Left ventricle myocardium inferior (tissue), 1 donor: ENCODE measurements at regions of chr4 and their contacts with region 1.

Region 1: DNA sequence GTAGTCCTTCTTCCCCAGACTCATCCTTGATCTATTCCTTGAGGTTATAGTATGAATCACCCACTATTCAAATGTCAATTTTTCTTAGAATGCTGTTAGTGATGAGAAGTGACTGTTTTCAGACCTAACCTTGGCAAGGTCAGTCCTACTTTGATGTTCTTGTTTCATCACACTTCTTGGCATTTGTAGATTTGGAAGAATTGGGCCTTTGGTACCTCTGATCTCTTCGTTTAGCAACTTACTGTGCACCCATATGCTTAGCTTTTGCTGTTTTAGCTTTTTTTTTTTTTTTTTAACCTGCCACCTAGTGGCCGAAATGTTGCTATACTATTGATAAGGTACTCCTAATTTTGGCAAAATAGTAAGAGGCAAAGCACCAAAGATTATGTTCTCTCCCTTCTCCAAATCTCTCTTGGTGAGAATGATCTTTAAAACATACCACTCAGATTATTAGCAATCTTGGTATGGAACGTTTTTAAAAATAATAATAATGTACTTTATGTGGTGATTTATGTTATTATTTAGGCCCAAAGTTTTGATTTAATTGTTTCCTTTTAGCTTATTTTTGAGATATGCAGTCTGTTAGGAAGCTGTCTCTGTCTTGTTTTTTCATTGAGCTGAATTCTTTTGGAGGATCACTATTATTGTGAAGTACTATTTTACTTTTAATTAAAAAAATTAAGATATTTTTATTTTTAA is 16.6 kb downstream of the DCK start:
- DNase-seq: no peak
- H3K4me3 ChIP-seq: no peak overlapping the region
- H3K27ac ChIP-seq: no peak overlapping the region
- H3K4me1 ChIP-seq: peaks cover 12% of the 10 kb centered on the region
- H3K27me3 ChIP-seq: no peaks in the 10 kb centered on the region
- CTCF ChIP-seq: peak; percentile 72

Region 2: GRCh38 chr4:70651864-70652506 is 358.1 kb before region 1 on chr4:
- intact Hi-C with region 1: loop called (anchors 10 kb)
- DNase-seq: no peak
- H3K4me3 ChIP-seq: no peak overlapping the region
- H3K27ac ChIP-seq: no peak overlapping the region
- H3K4me1 ChIP-seq: no peaks in the 10 kb centered on the region
- H3K27me3 ChIP-seq: no peaks in the 10 kb centered on the region
- CTCF ChIP-seq: peak; percentile 65

Region 3: DNA sequence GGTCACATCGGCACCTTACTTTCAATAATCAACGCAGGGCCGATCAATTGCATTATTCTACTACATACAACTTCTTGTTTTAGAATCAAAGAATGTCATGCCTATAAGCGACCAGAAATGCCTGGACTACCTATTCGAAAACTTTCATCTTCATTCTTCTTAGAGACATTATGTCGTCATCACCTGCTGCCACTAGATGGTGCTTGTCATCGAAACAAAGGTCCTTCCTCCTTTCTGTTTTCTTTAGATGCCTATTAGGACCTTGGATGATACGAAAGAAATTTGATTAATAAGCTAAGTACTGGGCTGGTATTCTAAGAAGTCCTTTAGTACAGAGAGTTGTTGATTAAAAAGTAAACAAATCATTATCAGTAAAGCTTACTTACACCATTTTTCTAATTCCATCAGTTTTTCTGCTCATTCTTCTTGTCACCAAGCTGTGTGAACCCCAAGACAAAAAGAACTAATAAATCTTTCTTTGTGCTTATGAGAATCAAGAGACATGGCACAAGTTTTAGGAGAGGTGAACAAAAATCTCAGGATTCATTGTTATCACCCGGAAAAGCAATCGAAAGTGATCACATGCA is 174.2 kb after region 1 on chr4:
- intact Hi-C with region 1: no loop called
- DNase-seq: no peak
- H3K4me3 ChIP-seq: no peak overlapping the region
- H3K27ac ChIP-seq: no peak overlapping the region
- H3K4me1 ChIP-seq: peaks cover 31% of the 10 kb centered on the region
- H3K27me3 ChIP-seq: peaks cover 22% of the 10 kb centered on the region
- CTCF ChIP-seq: peak; percentile 70

Region 4: DNA sequence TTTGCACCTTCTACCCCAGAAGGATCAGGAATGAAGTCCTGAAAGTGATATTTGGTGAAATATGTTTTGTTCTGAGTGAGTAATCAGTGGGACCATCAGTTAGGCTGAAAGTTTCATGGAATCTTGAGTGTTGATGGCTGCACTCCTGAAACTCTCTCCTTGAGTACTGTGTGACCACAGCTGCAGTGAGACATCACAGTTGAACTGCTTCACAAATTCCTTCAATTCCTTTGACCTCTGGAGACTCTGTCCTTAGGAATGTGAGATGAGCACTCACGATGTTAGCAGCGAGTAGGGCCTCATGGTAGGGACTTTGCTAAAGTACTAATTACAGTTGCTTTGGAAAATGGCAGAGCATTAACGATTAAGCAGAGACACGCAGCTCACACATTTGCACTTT is 185.9 kb after region 1 on chr4:
- intact Hi-C with region 1: no loop called
- DNase-seq: no peak
- H3K4me3 ChIP-seq: no peak overlapping the region
- H3K27ac ChIP-seq: no peak overlapping the region
- H3K4me1 ChIP-seq: no peaks in the 10 kb centered on the region
- H3K27me3 ChIP-seq: peaks cover 6% of the 10 kb centered on the region
- CTCF ChIP-seq: no peak